Spleen (tissue), 13 donors: ENCODE measurements at regions of chr20 and their contacts with region 1.

Region 1: DNA sequence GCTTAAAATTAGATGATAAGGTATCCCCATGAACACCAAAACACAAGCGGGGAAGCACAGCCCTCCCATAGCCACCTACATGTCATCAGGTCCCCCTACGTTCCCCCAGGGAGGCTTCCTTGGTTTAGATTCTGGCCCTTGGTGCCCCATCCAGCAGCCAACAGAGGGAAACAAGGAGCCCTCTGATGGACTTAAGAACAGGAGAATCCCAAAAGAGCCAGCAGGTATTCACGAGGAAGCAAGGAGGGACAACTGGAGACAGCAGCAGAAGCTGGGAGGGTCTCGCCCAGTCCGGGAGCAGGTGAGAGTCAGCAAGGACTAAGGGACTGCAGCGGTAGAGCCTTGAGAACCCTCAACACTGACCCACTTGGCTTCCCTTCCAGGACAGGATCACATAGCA is 58.4 kb upstream of the TOP1 start:
- DNase-seq: no peak
- H3K4me3 ChIP-seq: no peak overlapping the region
- H3K27ac ChIP-seq: no peak overlapping the region
- H3K4me1 ChIP-seq: peaks cover 0 to 12% (median 10%) of the 10 kb centered on the region in 6 donors
- H3K27me3 ChIP-seq: peaks cover 0 to 10% (median 0%) of the 10 kb centered on the region in 7 donors
- CTCF ChIP-seq: no peak
- POLR2A ChIP-seq: no peak

Region 2: DNA sequence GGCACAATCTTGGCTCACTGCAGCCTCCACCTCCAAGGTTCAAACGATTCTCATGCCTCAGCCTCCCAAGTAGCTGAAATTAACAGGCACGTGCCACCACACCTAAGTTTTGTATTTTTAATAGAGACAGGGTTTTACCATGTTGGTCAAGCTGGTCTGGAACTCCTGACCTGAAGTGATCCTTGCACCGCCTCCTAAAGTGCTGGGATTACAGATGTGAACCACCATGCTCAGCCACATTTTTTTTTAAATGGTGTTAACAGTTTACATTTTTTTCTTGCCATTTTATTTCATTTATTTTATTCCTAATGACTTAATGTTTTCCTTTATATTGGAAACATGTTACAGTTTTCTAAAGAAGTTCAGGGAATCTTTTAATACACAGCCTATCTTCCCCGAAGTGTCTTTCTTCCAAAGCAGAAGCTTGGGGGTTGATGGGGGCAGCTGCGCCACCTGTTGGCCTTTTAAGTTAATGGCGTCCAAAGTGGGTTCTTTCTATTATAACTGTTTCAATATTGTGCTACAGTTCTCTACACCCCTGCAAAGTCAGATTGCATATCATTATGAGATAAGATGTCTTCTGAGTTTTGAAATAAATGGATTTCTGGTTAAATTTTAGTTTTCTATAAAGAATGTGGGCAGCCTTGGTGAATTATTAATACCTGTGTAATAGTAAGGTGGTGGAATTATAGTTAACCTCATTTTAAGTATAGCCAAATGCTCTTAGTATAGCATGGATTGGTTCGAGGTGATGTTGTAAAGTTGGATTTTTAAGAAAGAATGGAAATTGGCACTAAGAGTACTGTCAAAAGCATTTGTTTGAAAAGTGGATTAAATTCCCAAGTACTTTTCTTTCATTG is 125.1 kb after region 1 on chr20:
- intact Hi-C with region 1: loop called (anchors 2 kb)
- DNase-seq: peak; percentile 82
- H3K4me3 ChIP-seq: no peak overlapping the region
- H3K27ac ChIP-seq: peak overlapping the region in 2 of 8 donors; percentile 13 to 36
- H3K4me1 ChIP-seq: peaks cover 0 to 18% (median 5%) of the 10 kb centered on the region in 6 donors
- H3K27me3 ChIP-seq: no peaks in the 10 kb centered on the region
- CTCF ChIP-seq: peak; percentile 56 to 90 (median 81)
- POLR2A ChIP-seq: no peak